HCT116 (cell line): ENCODE measurements at regions of chr6 and their contacts with region 1.

Region 1: DNA sequence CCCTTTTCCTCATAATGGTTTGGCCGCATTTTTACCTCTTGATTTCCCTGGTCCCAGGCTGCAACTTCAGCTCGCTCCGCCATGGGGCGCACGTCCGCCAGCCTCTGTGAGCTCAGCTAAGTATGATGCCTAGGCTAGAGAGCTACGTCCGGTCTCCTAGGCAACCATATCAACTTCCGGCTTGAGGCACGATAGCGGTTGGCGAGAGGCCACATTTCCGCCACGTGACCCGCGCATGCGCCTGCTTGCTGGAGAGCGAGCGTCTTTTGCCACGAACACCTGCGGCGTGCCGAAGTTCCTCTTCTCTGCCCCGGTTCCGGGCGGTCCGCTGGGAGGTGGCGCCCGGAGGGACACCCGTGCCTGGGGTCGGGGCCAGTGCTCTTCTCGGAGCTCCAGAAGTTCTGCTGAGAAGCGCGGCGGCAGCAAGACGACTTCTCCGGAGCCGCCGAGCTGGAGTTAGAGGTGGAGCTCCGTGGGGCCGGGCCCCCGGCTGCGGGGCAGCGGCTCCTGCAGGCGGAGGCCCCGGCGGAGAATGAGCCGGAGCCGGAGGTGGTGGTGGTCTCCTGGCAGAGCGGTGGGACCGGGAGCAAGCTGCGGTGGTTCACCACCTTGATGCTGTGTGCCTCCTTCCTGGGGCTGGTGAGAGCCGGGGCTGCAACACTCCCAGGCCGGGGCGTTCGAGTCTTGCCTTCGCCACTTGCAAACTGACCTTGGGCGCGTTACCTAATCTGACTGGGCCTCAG is 172.0 kb downstream of the SLC16A10 start:
- DNase-seq: peak; percentile 98
- ATAC-seq: peak; percentile 96
- H3K4me3 ChIP-seq: peak overlapping the region; percentile 72 to 82
- H3K27ac ChIP-seq: peak overlapping the region; percentile 61
- H3K4me1 ChIP-seq: peaks cover 14 to 43% of the 10 kb centered on the region in 2 experiments
- H3K27me3 ChIP-seq: no peaks in the 10 kb centered on the region
- CTCF ChIP-seq: peak; percentile 91 to 96 (median 93)
- POLR2A ChIP-seq: peak; percentile 74
- RAD21 ChIP-seq: peak; percentile 97

Region 2: GRCh38 chr6:109991201-109992101 is 1267.8 kb before region 1 on chr6:
- CTCF ChIA-PET with region 1: no interaction called
- POLR2A ChIA-PET with region 1: no interaction called
- RAD21 ChIA-PET with region 1: no interaction called
- intact Hi-C with region 1: no loop called
- DNase-seq: no peak
- ATAC-seq: no peak
- H3K4me3 ChIP-seq: no peak overlapping the region
- H3K27ac ChIP-seq: no peak overlapping the region
- H3K4me1 ChIP-seq: no peaks in the 10 kb centered on the region
- H3K27me3 ChIP-seq: peaks cover 6% of the 10 kb centered on the region; the same call in 1 of the 2 replicates
- CTCF ChIP-seq: no peak
- POLR2A ChIP-seq: no peak
- RAD21 ChIP-seq: no peak

Region 3: GRCh38 chr6:112043032-112044007 is 784.1 kb after region 1 on chr6:
- CTCF ChIA-PET with region 1: interaction called, 3 read pairs
- POLR2A ChIA-PET with region 1: interaction called, 3 read pairs
- RAD21 ChIA-PET with region 1: no interaction called
- intact Hi-C with region 1: loop called (anchors 1 kb)
- DNase-seq: peak; percentile 82
- ATAC-seq: peak; percentile 95
- H3K4me3 ChIP-seq: peak overlapping the region; percentile 61 to 72
- H3K27ac ChIP-seq: peak overlapping the region; percentile 44; the same call in 1 of the 2 replicates
- H3K4me1 ChIP-seq: 0 out of 4 replicates have a peak, but pooled peaks cover 0 to 4% of the 10 kb centered on the region in 2 experiments
- H3K27me3 ChIP-seq: no peaks in the 10 kb centered on the region
- CTCF ChIP-seq: peak; percentile 94 to 98 (median 96)
- POLR2A ChIP-seq: peak; percentile 23
- RAD21 ChIP-seq: peak; percentile 98